ENCODE measurements at regions of chr17 and their contacts with region 1.

Region 1: GRCh38 chr17:47895856-47896671 is at the start of gene SP2:
- DNase-seq: peak; percentile 99
- ATAC-seq: peak; percentile 97
- total RNA-seq, gene SP2: 24.2 TPM

Region 2: GRCh38 chr17:47949136-47949759 is 53.2 kb after region 1 on chr17:
- intact Hi-C with region 1: loop called (anchors 5 kb)
- DNase-seq: peak; percentile 96
- ATAC-seq: peak; percentile 93

Measured in sciatic nerve (tissue), 2 donors.